Activated CD4-positive, alpha-beta T cell treated with anti-CD3 and anti-CD28 coated beads, Interleukin-2, amount 10 ng/mL, durations not matched to agents 24 days and 14 days (primary cell): ENCODE measurements at regions of chr16 and their contacts with region 1.

Region 1: DNA sequence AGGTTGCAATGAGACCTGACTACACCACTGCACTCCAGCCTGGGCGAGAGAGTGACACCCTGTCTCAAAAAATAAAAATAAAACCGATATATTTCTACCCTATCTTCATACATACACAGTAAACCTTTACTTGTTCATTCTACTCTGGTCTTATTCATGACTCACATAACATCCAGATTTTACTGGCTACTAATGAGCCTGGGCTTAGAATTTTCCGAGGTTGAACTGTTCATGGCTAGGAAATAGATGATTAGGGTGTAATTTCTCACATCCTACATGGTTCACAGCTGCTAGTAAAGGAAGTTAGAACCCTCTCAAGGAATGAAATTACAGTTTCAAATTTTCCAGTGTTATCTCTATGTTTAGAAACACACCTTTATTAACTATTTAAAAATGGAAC is 14.7 kb downstream of the GSPT1 start:
- DNase-seq: no peak
- H3K4me3 Mint-ChIP-seq: no peak overlapping the region
- H3K27ac Mint-ChIP-seq: peak overlapping the region; percentile 29
- H3K4me1 Mint-ChIP-seq: peaks cover 30% of the 10 kb centered on the region
- H3K27me3 Mint-ChIP-seq: no peaks in the 10 kb centered on the region

Region 2: DNA sequence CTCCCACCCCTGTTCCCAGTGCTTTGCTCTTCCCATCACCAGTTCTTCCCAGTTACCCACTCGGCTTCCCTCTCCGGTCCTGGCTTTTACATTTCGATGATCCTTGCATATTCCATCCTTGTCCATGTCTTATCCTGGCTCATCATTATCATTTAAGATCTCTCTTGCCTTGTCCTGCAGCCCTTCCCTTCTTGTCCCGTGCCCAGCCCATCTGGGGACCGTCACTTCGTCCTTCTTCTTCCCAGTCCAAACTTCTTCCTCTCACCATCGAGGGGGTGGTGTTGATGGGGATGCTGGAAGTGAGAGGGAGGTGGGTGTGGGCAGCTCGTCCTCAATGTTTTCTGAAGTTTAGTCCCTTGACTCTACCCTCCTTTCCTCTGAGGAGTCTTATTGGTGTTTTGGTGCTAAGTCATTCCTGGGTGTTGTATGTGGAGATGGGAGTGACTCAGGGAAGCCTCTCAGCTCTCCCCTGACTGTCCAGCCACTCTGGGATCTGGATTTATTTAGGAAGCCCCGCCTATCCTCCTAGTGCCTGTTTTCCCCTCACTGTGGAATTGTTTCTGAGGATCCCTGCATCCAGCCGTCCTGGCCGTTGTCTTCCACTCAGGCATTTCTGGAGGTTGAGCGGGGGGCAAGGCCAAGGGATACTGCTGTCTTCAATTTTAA is 76.4 kb after region 1 on chr16:
- intact Hi-C with region 1: loop called (anchors 5 kb)
- DNase-seq: peak; percentile 56
- H3K4me3 Mint-ChIP-seq: peak overlapping the region; percentile 98
- H3K27ac Mint-ChIP-seq: peak overlapping the region; percentile 57
- H3K4me1 Mint-ChIP-seq: peaks cover 30% of the 10 kb centered on the region
- H3K27me3 Mint-ChIP-seq: no peaks in the 10 kb centered on the region